MCF 10A (cell line): ENCODE measurements at regions of chr7 and their contacts with region 1.

Region 1: GRCh38 chr7:137656227-137656849 is 190.4 kb downstream of the DGKI start:
- DNase-seq: peak; percentile 77
- H3K4me3 Mint-ChIP-seq: no peak overlapping the region
- H3K27ac Mint-ChIP-seq: no peak overlapping the region
- H3K4me1 Mint-ChIP-seq: no peaks in the 10 kb centered on the region
- H3K27me3 Mint-ChIP-seq: no peaks in the 10 kb centered on the region
- CTCF ChIP-seq: peak; percentile 82

Region 2: GRCh38 chr7:137266764-137267163 is 389.6 kb before region 1 on chr7:
- CTCF ChIA-PET with region 1: no interaction called
- POLR2A ChIA-PET with region 1: no interaction called
- intact Hi-C with region 1: no loop called
- DNase-seq: no peak
- H3K4me3 Mint-ChIP-seq: no peak overlapping the region
- H3K27ac Mint-ChIP-seq: no peak overlapping the region
- H3K4me1 Mint-ChIP-seq: no peaks in the 10 kb centered on the region
- H3K27me3 Mint-ChIP-seq: peaks cover 6% of the 10 kb centered on the region
- CTCF ChIP-seq: no peak

Region 3: GRCh38 chr7:137592232-137592896 is 64.0 kb before region 1 on chr7:
- CTCF ChIA-PET with region 1: interaction called, 10 read pairs
- POLR2A ChIA-PET with region 1: no interaction called
- intact Hi-C with region 1: no loop called
- DNase-seq: peak; percentile 70
- H3K4me3 Mint-ChIP-seq: no peak overlapping the region
- H3K27ac Mint-ChIP-seq: no peak overlapping the region
- H3K4me1 Mint-ChIP-seq: no peaks in the 10 kb centered on the region
- H3K27me3 Mint-ChIP-seq: peaks cover 14% of the 10 kb centered on the region
- CTCF ChIP-seq: peak; percentile 91

Region 4: DNA sequence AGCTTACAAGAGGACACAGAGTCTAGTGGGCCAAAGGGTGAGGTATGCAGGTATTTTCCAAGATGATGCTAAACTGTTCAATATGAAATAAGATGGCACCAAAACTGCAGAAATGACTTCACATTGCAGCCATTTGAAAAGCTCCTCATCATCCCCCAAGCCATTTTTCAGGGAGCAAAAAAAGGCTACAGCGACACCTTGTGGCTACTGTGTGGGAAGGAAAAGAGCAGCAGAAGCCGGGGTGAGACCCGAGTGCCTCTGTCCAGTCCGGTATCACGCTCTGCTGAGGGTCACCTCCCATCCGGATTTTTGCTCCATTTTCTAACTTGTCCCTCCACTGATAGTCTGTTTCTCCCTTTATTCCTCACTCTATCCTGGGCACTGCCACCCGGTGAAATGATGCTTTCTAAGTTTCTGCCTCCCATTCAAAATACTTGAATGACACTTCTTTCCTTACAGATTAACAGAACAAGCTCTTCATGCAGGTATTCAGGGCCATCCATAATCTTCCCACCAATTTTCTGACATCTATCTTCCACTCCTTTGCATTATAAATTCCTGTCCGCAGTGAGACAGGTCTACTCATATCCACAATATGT is 29.8 kb before region 1 on chr7:
- CTCF ChIA-PET with region 1: interaction called, 15 read pairs
- POLR2A ChIA-PET with region 1: no interaction called
- intact Hi-C with region 1: no loop called
- DNase-seq: peak; percentile 73
- H3K4me3 Mint-ChIP-seq: no peak overlapping the region
- H3K27ac Mint-ChIP-seq: no peak overlapping the region
- H3K4me1 Mint-ChIP-seq: peaks cover 5% of the 10 kb centered on the region
- H3K27me3 Mint-ChIP-seq: peaks cover 25% of the 10 kb centered on the region
- CTCF ChIP-seq: peak; percentile 66

Region 5: DNA sequence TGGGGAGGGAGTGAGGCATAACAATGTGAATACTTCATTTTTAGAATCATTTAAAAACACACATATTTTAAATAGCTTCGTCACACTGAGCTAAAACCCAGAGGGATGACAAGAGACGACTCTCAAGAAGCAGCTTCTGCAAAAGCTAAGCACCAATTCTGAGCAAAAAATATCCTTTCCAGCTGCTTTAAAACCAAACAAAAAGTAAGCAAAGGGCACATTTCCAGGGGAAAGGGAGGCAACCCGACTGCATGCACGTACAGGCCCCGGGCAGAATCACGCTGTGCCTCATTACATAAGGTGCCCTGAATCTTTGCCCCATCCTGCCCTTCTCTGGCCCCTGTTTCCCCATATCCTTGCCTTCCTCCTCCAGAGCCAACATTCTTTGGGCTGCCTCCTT is 112.0 kb after region 1 on chr7:
- CTCF ChIA-PET with region 1: interaction called, 11 read pairs
- POLR2A ChIA-PET with region 1: interaction called, 3 read pairs
- intact Hi-C with region 1: no loop called
- DNase-seq: peak; percentile 30
- H3K4me3 Mint-ChIP-seq: no peak overlapping the region
- H3K27ac Mint-ChIP-seq: no peak overlapping the region
- H3K4me1 Mint-ChIP-seq: peaks cover 28% of the 10 kb centered on the region
- H3K27me3 Mint-ChIP-seq: no peaks in the 10 kb centered on the region
- CTCF ChIP-seq: no peak

Region 6: GRCh38 chr7:137882261-137882668 is 225.9 kb after region 1 on chr7:
- CTCF ChIA-PET with region 1: interaction called, 53 read pairs
- POLR2A ChIA-PET with region 1: interaction called, 5 read pairs
- intact Hi-C with region 1: loop called (anchors 1 kb)
- DNase-seq: peak; percentile 98
- H3K4me3 Mint-ChIP-seq: peak overlapping the region; percentile 13
- H3K27ac Mint-ChIP-seq: peak overlapping the region; percentile 52
- H3K4me1 Mint-ChIP-seq: peaks cover 38% of the 10 kb centered on the region
- H3K27me3 Mint-ChIP-seq: no peaks in the 10 kb centered on the region
- CTCF ChIP-seq: no peak

Region 7: GRCh38 chr7:137992550-137993394 is 336.4 kb after region 1 on chr7:
- CTCF ChIA-PET with region 1: interaction called, 11 read pairs
- POLR2A ChIA-PET with region 1: no interaction called
- intact Hi-C with region 1: no loop called
- DNase-seq: peak; percentile 88
- H3K4me3 Mint-ChIP-seq: peak overlapping the region; percentile 30
- H3K27ac Mint-ChIP-seq: peak overlapping the region; percentile 87
- H3K4me1 Mint-ChIP-seq: peaks cover 20% of the 10 kb centered on the region
- H3K27me3 Mint-ChIP-seq: no peaks in the 10 kb centered on the region
- CTCF ChIP-seq: no peak